CD8-positive, alpha-beta memory T cell (primary cell): ENCODE measurements at regions of chr9 and their contacts with region 1.

Region 1: GRCh38 chr9:33167046-33167808 is at the start of gene B4GALT1:
- DNase-seq: peak; percentile 88 to 98 (median 95)
- H3K4me3 ChIP-seq: peak within 1 kb of the TSS; percentile 62
- H3K4me3 Mint-ChIP-seq: peak within 1 kb of the TSS; percentile 88 to 99 (median 98)
- H3K27ac ChIP-seq: peak within 1 kb of the TSS; percentile 91
- H3K27ac Mint-ChIP-seq: peak within 1 kb of the TSS; percentile 98 to 99 (median 99)
- H3K4me1 ChIP-seq: peaks cover 43% of the 10 kb centered on the region
- H3K4me1 Mint-ChIP-seq: peaks cover 52 to 59% (median 57%) of the 10 kb centered on the region in 3 donors
- H3K27me3 ChIP-seq: no peaks in the 10 kb centered on the region
- H3K27me3 Mint-ChIP-seq: no peaks in the 10 kb centered on the region
- total RNA-seq, gene B4GALT1: 38.0 to 38.3 TPM

Region 2: GRCh38 chr9:33024966-33025571 is 142.2 kb before region 1 on chr9 and contains the start of gene DNAJA1:
- CTCF ChIA-PET with region 1: no interaction called
- POLR2A ChIA-PET with region 1: interaction called, 12 read pairs
- DNase-seq: peak; percentile 92 to 97 (median 96)
- H3K4me3 ChIP-seq: peak within 1 kb of the TSS; percentile 94
- H3K4me3 Mint-ChIP-seq: peak within 1 kb of the TSS; percentile 93 to 99 (median 97)
- H3K27ac ChIP-seq: peak within 1 kb of the TSS; percentile 99
- H3K27ac Mint-ChIP-seq: peak within 1 kb of the TSS; percentile 94 to 99 (median 98)
- H3K4me1 ChIP-seq: peaks cover 54% of the 10 kb centered on the region
- H3K4me1 Mint-ChIP-seq: peaks cover 66 to 83% (median 82%) of the 10 kb centered on the region in 3 donors
- H3K27me3 ChIP-seq: no peaks in the 10 kb centered on the region
- H3K27me3 Mint-ChIP-seq: peaks cover 0 to 7% of the 10 kb centered on the region in 2 donors
- total RNA-seq, gene DNAJA1: 318 to 332 TPM

Region 3: DNA sequence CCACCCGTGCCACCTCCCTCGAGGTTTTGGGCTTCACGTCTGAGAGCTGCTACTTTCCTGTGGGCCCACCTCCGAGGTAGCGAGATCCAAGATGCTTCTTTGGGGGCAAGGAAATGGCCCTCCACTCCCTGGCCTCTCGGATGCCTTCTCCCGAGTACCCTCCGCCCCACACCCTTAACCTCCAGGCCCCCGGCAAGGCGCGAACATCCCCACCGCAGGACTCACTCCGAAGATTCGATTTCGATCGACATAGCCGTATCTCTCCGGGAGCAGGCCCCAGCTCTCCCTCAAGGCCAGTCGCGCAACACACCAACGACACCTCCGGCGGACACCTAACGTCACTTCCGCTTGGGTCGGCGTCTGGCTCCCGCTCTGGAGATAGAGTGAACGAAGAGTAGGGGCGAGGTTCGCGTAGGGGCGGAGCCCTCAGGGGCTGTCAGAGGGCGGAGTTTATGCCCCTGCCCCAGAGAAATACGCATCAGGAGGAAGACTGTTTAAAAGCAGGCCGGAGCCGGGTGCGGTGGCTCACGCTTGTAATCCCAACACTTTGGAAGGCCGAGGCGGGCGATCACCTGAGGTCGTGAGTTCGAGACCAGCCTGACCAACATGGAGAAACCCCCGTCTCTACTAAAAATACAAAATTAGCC is 90.7 kb before region 1 on chr9 and contains the start of gene SMU1:
- CTCF ChIA-PET with region 1: interaction called, 10 read pairs
- POLR2A ChIA-PET with region 1: interaction called, 16 read pairs
- DNase-seq: peak; percentile 92 to 97 (median 94)
- H3K4me3 ChIP-seq: peak within 1 kb of the TSS; percentile 86
- H3K4me3 Mint-ChIP-seq: peak within 1 kb of the TSS; percentile 92 to 100 (median 99)
- H3K27ac ChIP-seq: peak within 1 kb of the TSS; percentile 95
- H3K27ac Mint-ChIP-seq: peak within 1 kb of the TSS; percentile 95 to 100 (median 100)
- H3K4me1 ChIP-seq: peaks cover 22% of the 10 kb centered on the region
- H3K4me1 Mint-ChIP-seq: peaks cover 30 to 56% (median 46%) of the 10 kb centered on the region in 3 donors
- H3K27me3 ChIP-seq: no peaks in the 10 kb centered on the region
- H3K27me3 Mint-ChIP-seq: no peaks in the 10 kb centered on the region
- total RNA-seq, gene SMU1: 27.5 to 27.6 TPM

Region 4: DNA sequence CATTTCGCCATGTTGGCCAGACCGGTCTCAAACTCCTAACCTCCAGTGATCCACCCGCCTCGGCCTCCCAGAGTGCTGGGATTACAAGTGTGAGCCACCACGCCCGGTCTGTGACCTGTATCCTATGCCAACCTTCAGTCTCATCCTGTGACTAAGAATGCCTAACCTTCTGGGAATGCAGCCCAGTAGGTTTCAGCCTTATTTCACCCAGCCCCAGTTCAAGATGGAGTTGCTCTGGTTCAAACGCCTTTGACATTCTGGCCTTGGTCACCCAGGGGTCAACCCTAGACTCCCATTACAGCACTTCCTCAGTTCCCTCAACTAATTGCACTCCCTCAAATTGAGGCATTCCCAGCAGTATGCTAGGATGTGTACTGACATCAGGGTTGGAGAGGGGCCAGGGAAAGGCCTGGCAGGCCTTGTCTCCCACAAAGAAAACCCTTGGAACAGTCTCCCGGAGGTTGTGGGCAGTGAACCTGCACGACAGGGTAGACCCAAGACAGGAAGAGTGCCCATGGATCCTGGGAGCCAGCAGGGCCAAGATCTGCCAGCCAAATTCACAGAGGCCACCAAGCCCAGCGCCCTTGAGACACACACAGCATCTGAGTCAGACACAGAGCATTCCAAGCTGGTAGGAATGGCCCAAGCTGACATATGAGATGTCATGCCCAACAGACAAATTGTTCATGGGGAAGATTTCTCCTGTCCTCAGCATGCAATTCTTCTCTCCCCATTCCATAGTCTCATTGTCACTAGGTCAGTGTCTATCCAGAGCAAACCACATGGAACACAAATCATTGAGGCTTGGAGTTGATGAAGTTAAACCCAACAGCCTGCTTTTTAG is 65.9 kb before region 1 on chr9:
- CTCF ChIA-PET with region 1: no interaction called
- POLR2A ChIA-PET with region 1: interaction called, 11 read pairs
- DNase-seq: no peak
- H3K4me3 ChIP-seq: no peak overlapping the region
- H3K4me3 Mint-ChIP-seq: peak overlapping the region in 1 of 7 donors; percentile 45
- H3K27ac ChIP-seq: no peak overlapping the region
- H3K27ac Mint-ChIP-seq: peak overlapping the region in 3 of 8 donors; percentile 40 to 95 (median 42)
- H3K4me1 ChIP-seq: no peaks in the 10 kb centered on the region
- H3K4me1 Mint-ChIP-seq: peaks cover 0 to under 1% (median 0%) of the 10 kb centered on the region in 3 donors
- H3K27me3 ChIP-seq: no peaks in the 10 kb centered on the region
- H3K27me3 Mint-ChIP-seq: no peaks in the 10 kb centered on the region

Region 5: DNA sequence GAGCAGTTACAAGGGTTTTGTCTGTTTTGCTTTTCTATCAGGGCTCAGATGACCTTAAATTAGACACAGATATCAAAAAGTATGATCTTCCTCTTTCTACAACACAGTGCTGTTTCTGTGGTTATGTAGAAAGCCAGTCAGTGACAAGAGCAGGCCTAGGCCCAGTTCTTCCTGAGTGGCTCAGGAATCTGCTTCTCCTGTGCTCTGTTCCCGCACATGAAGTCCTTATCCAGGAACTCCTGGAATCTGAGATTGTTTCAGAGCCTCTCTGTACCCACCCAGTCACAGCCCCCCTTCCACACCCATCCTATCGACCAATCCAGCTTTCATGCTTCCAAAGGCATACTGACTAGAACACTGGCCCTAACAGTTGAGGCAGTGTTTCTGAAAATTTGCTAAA is 50.4 kb before region 1 on chr9:
- CTCF ChIA-PET with region 1: no interaction called
- POLR2A ChIA-PET with region 1: no interaction called
- DNase-seq: no peak
- H3K4me3 ChIP-seq: no peak overlapping the region
- H3K4me3 Mint-ChIP-seq: peak overlapping the region in 2 of 7 donors; percentile 12 to 34
- H3K27ac ChIP-seq: no peak overlapping the region
- H3K27ac Mint-ChIP-seq: peak overlapping the region in 6 of 8 donors; percentile 12 to 88 (median 81)
- H3K4me1 ChIP-seq: peaks cover 12% of the 10 kb centered on the region
- H3K4me1 Mint-ChIP-seq: peaks cover 38 to 49% (median 41%) of the 10 kb centered on the region in 3 donors
- H3K27me3 ChIP-seq: no peaks in the 10 kb centered on the region
- H3K27me3 Mint-ChIP-seq: no peaks in the 10 kb centered on the region

Region 6: GRCh38 chr9:33225319-33226149 is 58.3 kb after region 1 on chr9:
- CTCF ChIA-PET with region 1: interaction called, 10 read pairs
- POLR2A ChIA-PET with region 1: no interaction called
- DNase-seq: peak; percentile 48 to 70 (median 58)
- H3K4me3 ChIP-seq: no peak overlapping the region
- H3K4me3 Mint-ChIP-seq: no peak overlapping the region
- H3K27ac ChIP-seq: no peak overlapping the region
- H3K27ac Mint-ChIP-seq: peak overlapping the region in 1 of 8 donors; percentile 52
- H3K4me1 ChIP-seq: no peaks in the 10 kb centered on the region
- H3K4me1 Mint-ChIP-seq: peaks cover 12 to 21% (median 20%) of the 10 kb centered on the region in 3 donors
- H3K27me3 ChIP-seq: no peaks in the 10 kb centered on the region
- H3K27me3 Mint-ChIP-seq: peaks cover 0 to 10% of the 10 kb centered on the region in 2 donors

Region 7: GRCh38 chr9:33272061-33272460 is 104.8 kb after region 1 on chr9:
- CTCF ChIA-PET with region 1: no interaction called
- POLR2A ChIA-PET with region 1: no interaction called
- DNase-seq: no peak
- H3K4me3 ChIP-seq: no peak overlapping the region
- H3K4me3 Mint-ChIP-seq: peak overlapping the region in 1 of 7 donors; percentile 40
- H3K27ac ChIP-seq: no peak overlapping the region
- H3K27ac Mint-ChIP-seq: peak overlapping the region in 2 of 8 donors; percentile 38 to 54
- H3K4me1 ChIP-seq: peaks cover 5% of the 10 kb centered on the region
- H3K4me1 Mint-ChIP-seq: peaks cover 13 to 25% (median 21%) of the 10 kb centered on the region in 3 donors
- H3K27me3 ChIP-seq: no peaks in the 10 kb centered on the region
- H3K27me3 Mint-ChIP-seq: no peaks in the 10 kb centered on the region